T-cell (primary cell): ENCODE measurements at regions of chr3 and their contacts with region 1.

Region 1: DNA sequence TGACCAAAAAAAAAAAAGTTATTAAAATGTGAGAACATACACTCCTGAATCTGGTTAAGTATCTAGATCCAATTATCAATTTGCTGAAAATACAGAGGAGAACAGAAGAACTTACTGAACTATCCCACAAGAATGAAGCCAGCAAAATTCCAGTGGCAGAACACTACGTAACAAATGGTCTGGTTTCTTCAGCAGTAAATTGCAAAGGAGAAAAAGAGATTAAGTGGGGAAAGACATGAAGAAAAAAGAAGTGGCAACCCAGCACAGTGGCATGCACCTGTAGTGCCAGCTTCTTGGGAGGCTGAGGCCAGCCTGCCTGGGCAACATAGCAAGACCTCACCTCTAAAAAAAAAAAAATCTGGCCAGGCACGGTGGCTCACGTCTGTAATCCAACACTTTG is 62.1 kb downstream of the LHFPL4 start:
- DNase-seq: no peak
- ATAC-seq: no peak
- H3K4me3 ChIP-seq: no peak overlapping the region
- H3K4me3 Mint-ChIP-seq: no peak overlapping the region
- H3K27ac ChIP-seq: no peak overlapping the region
- H3K27ac Mint-ChIP-seq: no peak overlapping the region
- H3K4me1 ChIP-seq: no peaks in the 10 kb centered on the region
- H3K4me1 Mint-ChIP-seq: no peaks in the 10 kb centered on the region
- H3K27me3 ChIP-seq: no peaks in the 10 kb centered on the region
- H3K27me3 Mint-ChIP-seq: no peaks in the 10 kb centered on the region

Region 2: GRCh38 chr3:9012521-9012920 is 479.0 kb before region 1 on chr3:
- CTCF ChIA-PET with region 1: no interaction called
- POLR2A ChIA-PET with region 1: interaction called in 1 of 2 experiments, 11 read pairs
- DNase-seq: no peak
- ATAC-seq: peak in 1 of 4 experiments; percentile 51
- H3K4me3 ChIP-seq: no peak overlapping the region
- H3K4me3 Mint-ChIP-seq: no peak overlapping the region
- H3K27ac ChIP-seq: no peak overlapping the region
- H3K27ac Mint-ChIP-seq: no peak overlapping the region
- H3K4me1 ChIP-seq: peaks cover 0 to 5% of the 10 kb centered on the region in 2 experiments
- H3K4me1 Mint-ChIP-seq: peaks cover 13 to 16% (median 13%) of the 10 kb centered on the region in 3 donors
- H3K27me3 ChIP-seq: no peaks in the 10 kb centered on the region
- H3K27me3 Mint-ChIP-seq: peaks cover 0 to 3% of the 10 kb centered on the region in 2 donors

Region 3: GRCh38 chr3:9730657-9731205 is 239.2 kb after region 1 on chr3:
- CTCF ChIA-PET with region 1: no interaction called
- POLR2A ChIA-PET with region 1: no interaction called
- DNase-seq: peak in 1 of 35 experiments; percentile 8
- ATAC-seq: peak; percentile 31 to 49 (median 37)
- H3K4me3 ChIP-seq: peak overlapping the region; percentile 66 to 68
- H3K4me3 Mint-ChIP-seq: peak overlapping the region; percentile 83 to 90 (median 87)
- H3K27ac ChIP-seq: peak overlapping the region; percentile 50
- H3K27ac Mint-ChIP-seq: peak overlapping the region; percentile 93 to 98
- H3K4me1 ChIP-seq: peaks cover 15 to 50% of the 10 kb centered on the region in 2 experiments
- H3K4me1 Mint-ChIP-seq: peaks cover 56 to 65% (median 62%) of the 10 kb centered on the region in 3 donors
- H3K27me3 ChIP-seq: no peaks in the 10 kb centered on the region
- H3K27me3 Mint-ChIP-seq: no peaks in the 10 kb centered on the region

Region 4: DNA sequence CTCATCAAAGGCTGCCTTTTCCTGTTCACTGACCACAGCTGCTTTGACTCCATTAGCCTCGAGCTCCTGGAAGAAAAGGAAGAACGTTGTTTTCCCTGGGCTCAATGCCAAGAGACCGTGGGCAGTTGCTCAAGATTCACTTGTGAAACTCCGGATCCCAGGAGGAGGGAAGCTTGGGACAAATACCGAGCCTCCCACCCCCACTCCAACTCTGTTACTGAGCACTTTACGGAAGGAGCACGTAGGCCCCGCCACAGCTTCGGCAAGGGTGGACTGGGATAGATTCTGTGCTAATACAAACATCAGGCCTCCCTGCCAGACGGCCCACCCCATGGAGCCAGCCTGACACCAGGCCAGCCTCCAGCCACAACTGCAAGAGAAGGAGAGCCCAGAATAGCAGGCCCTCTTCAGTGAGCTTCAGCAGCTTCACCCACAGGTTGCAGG is 524.0 kb after region 1 on chr3:
- CTCF ChIA-PET with region 1: no interaction called
- POLR2A ChIA-PET with region 1: interaction called in 1 of 2 experiments, 13 read pairs
- DNase-seq: no peak
- ATAC-seq: no peak
- H3K4me3 ChIP-seq: no peak overlapping the region
- H3K4me3 Mint-ChIP-seq: no peak overlapping the region
- H3K27ac ChIP-seq: no peak overlapping the region
- H3K27ac Mint-ChIP-seq: no peak overlapping the region
- H3K4me1 ChIP-seq: peaks cover 2 to 12% of the 10 kb centered on the region in 2 experiments
- H3K4me1 Mint-ChIP-seq: peaks cover 2 to 13% (median 5%) of the 10 kb centered on the region in 3 donors
- H3K27me3 ChIP-seq: peaks cover 0 to 11% of the 10 kb centered on the region in 2 experiments
- H3K27me3 Mint-ChIP-seq: peaks cover under 1 to 7% of the 10 kb centered on the region in 2 donors